ENCODE measurements at regions of chr6 and their contacts with region 1.

Region 1: DNA sequence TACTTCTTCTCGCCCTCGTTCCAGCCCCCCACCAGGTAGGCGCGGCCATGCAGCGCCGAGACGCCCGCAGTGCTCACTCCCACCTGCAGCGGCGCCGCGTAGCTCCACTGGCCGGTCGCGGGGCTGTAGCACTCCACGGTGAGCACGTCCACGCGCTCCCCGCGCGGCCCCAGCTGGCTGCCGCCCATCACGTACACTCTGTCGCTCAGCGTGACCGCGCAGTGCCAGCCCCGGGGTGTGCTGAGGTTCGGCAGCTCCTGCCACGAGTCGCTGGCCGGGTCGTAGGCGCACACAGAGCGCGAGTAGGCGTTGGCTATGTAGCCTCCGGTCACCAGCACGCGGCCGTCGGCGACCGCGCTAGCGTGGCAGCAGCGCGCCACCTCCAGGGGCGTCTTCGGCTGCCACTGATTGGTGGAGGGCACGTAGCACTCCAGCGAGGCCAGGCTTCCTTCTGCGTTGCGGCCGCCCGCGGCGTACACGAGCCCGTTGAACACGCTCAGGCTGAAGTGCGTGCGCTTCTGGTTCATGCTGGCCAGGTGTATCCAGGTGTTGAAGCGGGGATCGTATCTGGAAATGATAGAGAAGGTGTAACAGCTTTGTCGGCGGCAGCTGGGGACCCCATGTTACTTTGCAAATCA is 13.7 kb downstream of the KLHL31 start:
- DNase-seq: peak; percentile 83
- H3K4me3 Mint-ChIP-seq: peak overlapping the region; percentile 90
- H3K27ac Mint-ChIP-seq: peak overlapping the region; percentile 77
- H3K4me1 Mint-ChIP-seq: peaks cover 33% of the 10 kb centered on the region
- H3K27me3 Mint-ChIP-seq: peaks cover 5% of the 10 kb centered on the region

Region 2: DNA sequence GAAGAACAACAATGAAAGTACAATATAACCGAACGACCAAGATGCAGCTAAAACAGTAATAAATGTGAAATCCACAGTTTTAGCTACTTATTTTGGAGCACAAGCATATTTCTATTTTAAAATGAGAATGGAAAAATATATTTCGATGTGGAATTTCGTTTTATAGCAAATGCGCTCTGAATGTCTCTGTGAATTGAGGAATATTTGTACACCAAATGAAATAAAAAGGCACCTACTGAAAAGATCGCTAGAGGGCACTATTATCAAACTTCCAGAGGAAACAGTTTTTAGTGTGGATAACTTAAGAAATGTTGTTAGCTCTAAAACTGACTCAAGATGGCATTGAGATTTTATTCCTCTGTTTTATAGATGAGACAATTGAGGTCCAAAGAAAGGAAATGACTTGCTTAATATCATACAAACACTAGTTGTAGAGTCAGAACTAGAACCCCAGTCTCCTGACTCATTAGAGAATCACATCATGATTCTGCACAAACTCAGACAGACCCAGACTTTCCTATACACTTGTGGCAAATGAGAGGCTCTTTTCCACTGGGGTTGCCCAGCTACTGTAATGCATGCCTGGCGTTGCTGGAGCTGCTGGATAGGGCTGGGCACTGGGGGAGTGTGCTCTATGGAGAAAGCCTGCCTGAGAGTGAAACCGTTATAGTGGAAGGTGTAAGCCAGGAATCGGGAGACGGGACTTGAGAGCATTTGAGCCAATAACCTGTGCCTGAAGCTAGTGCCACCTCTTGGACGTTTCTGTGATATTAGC is 158.8 kb before region 1 on chr6:
- CTCF ChIA-PET with region 1: interaction called, 97 read pairs
- POLR2A ChIA-PET with region 1: interaction called, 6 read pairs
- DNase-seq: peak; percentile 23
- H3K4me3 Mint-ChIP-seq: no peak overlapping the region
- H3K27ac Mint-ChIP-seq: no peak overlapping the region
- H3K4me1 Mint-ChIP-seq: peaks cover 12% of the 10 kb centered on the region
- H3K27me3 Mint-ChIP-seq: peaks cover 6% of the 10 kb centered on the region

Region 3: GRCh38 chr6:53544470-53545308 is 107.2 kb before region 1 on chr6 and contains the start of gene GCLC:
- CTCF ChIA-PET with region 1: interaction called, 25 read pairs
- POLR2A ChIA-PET with region 1: interaction called, 15 read pairs
- DNase-seq: peak; percentile 91
- H3K4me3 Mint-ChIP-seq: peak within 1 kb of the TSS; percentile 97
- H3K27ac Mint-ChIP-seq: peak within 1 kb of the TSS; percentile 90
- H3K4me1 Mint-ChIP-seq: peaks cover 56% of the 10 kb centered on the region
- H3K27me3 Mint-ChIP-seq: peaks cover 13% of the 10 kb centered on the region
- total RNA-seq, gene GCLC: 29.1 to 30.6 TPM

Region 4: DNA sequence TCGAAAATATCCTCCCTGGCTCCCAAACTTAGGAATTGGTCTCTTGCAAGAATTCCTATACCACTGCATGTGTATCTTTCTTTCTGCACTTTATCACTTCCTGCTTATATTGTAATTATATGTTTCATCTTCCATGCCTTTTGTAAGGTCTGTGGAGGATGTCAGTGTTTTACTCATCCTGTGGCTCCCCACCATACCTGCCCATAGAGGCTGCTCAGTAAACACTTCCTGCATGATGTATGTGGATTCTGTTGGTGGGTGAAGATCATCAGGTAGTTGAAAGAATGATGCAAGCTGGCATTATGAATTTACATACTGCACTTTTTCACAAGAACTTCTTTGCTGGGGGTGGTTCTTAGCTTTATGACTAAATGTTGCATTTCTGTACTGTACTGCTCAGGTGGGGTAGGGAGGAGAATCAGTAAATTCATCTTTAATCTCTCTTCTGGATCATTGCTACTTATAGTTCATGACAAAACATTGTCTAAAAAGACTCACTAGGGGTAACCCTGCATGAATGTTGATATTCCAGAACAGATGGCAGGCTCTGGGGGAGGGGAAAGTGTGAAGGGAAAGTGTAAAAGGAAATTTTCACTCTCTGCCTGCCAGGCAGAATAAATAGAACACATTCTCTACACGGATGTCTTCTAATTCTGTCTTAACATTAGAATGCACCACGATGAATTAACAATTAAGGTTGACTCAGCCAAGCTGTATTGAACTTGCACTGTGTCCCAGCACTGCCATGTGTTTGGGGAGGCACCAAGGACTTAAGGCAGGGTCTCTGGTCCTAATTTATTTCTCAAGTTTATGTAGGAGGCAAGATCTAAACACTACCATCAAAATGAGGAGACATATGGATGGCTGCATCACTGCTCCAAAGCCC is 49.7 kb after region 1 on chr6:
- CTCF ChIA-PET with region 1: no interaction called
- POLR2A ChIA-PET with region 1: no interaction called
- DNase-seq: peak; percentile 21
- H3K4me3 Mint-ChIP-seq: no peak overlapping the region
- H3K27ac Mint-ChIP-seq: peak overlapping the region; percentile 2
- H3K4me1 Mint-ChIP-seq: peaks cover 10% of the 10 kb centered on the region
- H3K27me3 Mint-ChIP-seq: peaks cover 4% of the 10 kb centered on the region